T-cell (primary cell): ENCODE measurements at regions of chr1 and their contacts with region 1.

Region 1: DNA sequence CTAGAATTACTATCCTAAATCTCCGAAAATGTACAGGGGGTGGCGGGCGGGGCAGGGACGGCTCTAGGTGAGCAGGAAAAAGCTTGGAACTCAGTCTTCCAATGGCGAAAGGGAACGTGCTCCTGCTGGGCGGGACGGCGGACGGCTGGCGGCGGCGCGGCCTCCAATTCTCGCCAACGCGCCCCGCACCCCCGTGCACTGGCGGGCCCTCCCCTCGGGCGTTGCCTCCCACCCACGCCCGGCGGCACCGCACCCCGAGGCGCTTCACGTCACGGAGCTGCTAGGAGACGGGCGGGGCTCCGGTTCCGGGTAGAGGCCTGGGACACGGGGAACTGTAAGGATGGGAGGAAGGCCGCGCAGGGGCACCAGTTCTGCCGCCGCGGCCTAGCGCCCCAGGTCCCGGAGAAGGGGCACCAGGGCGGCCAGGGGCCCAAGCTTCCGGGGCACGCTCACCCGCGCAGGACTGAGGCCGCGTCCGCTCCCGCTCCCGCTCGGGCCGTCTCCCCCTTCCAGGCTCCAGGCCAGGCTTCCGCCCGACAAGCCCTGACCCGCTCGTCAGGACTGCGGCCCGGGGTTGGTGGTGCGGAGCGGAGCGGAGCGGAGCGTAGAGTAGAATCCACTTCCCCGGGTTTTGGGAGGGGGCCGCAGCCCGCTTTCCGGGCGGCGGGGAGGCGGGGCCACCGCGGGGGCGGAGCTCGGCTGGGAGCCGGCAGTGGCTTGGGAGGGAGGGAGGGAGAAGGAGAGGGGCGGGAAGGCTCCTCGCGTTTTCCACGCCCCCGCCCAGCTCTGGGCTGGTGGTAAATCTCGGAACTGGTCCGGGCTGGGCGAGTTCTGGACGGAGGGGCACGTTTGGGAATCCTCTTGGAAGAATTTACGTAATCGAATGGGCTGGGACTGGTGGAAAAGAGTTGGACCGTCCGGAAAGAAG is at the start of gene DDX59:
- DNase-seq: peak; percentile 73 to 92 (median 83)
- ATAC-seq: peak; percentile 88 to 91 (median 89)
- H3K4me3 ChIP-seq: peak within 1 kb of the TSS; percentile 61 to 78
- H3K4me3 Mint-ChIP-seq: peak within 1 kb of the TSS; percentile 93 to 95 (median 95)
- H3K27ac ChIP-seq: peak within 1 kb of the TSS; percentile 86
- H3K27ac Mint-ChIP-seq: peak within 1 kb of the TSS; percentile 88 to 97
- H3K4me1 ChIP-seq: peaks cover 12 to 17% of the 10 kb centered on the region in 2 experiments
- H3K4me1 Mint-ChIP-seq: peaks cover 44 to 52% (median 50%) of the 10 kb centered on the region in 3 donors
- H3K27me3 ChIP-seq: no peaks in the 10 kb centered on the region
- H3K27me3 Mint-ChIP-seq: no peaks in the 10 kb centered on the region
- total RNA-seq, gene DDX59: 19.2 to 38.7 (median 31.7) TPM

Region 2: DNA sequence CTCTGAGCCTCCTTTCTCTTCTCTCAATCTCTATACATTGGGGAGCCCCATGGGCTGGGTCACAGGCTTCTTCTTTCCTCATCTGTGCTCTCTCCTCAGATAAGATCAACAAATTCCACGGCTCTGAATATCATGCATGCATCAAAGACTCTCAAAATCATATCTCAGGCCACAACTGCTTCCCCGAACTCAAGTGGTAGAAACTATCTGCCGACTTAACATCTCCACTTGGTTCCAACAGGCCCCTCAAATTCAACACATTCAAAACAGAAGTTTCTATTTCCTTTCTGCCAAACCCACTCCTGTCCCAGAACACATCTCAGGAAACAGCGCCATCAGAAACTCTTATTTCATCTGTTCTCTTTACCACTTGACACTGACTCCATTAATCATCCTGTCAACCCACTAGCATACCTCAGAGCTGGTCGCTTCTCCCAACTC is 16.5 kb before region 1 on chr1:
- CTCF ChIA-PET with region 1: interaction called in 1 of 2 experiments, 4 read pairs
- POLR2A ChIA-PET with region 1: interaction called in 1 of 2 experiments, 13 read pairs
- DNase-seq: no peak
- ATAC-seq: no peak
- H3K4me3 ChIP-seq: no peak overlapping the region
- H3K4me3 Mint-ChIP-seq: no peak overlapping the region
- H3K27ac ChIP-seq: no peak overlapping the region
- H3K27ac Mint-ChIP-seq: peak overlapping the region; percentile 10 to 78
- H3K4me1 ChIP-seq: no peaks in the 10 kb centered on the region
- H3K4me1 Mint-ChIP-seq: peaks cover 10 to 26% (median 14%) of the 10 kb centered on the region in 3 donors
- H3K27me3 ChIP-seq: no peaks in the 10 kb centered on the region
- H3K27me3 Mint-ChIP-seq: no peaks in the 10 kb centered on the region

Region 3: GRCh38 chr1:200724064-200724463 is 54.5 kb after region 1 on chr1:
- CTCF ChIA-PET with region 1: no interaction called
- POLR2A ChIA-PET with region 1: no interaction called
- DNase-seq: no peak
- ATAC-seq: no peak
- H3K4me3 ChIP-seq: no peak overlapping the region
- H3K4me3 Mint-ChIP-seq: no peak overlapping the region
- H3K27ac ChIP-seq: no peak overlapping the region
- H3K27ac Mint-ChIP-seq: no peak overlapping the region
- H3K4me1 ChIP-seq: no peaks in the 10 kb centered on the region
- H3K4me1 Mint-ChIP-seq: no peaks in the 10 kb centered on the region
- H3K27me3 ChIP-seq: peaks cover 0 to 3% of the 10 kb centered on the region in 2 experiments
- H3K27me3 Mint-ChIP-seq: peaks cover 3 to 7% of the 10 kb centered on the region in 2 donors

Region 4: GRCh38 chr1:200802865-200803512 is 133.4 kb after region 1 on chr1:
- CTCF ChIA-PET with region 1: interaction called, 5 to 6 read pairs
- POLR2A ChIA-PET with region 1: interaction called in 1 of 2 experiments, 12 read pairs
- DNase-seq: peak; percentile 24 to 86 (median 61)
- ATAC-seq: peak; percentile 73 to 80 (median 78)
- H3K4me3 ChIP-seq: no peak overlapping the region
- H3K4me3 Mint-ChIP-seq: no peak overlapping the region
- H3K27ac ChIP-seq: no peak overlapping the region
- H3K27ac Mint-ChIP-seq: no peak overlapping the region
- H3K4me1 ChIP-seq: no peaks in the 10 kb centered on the region
- H3K4me1 Mint-ChIP-seq: peaks cover 2 to 5% (median 4%) of the 10 kb centered on the region in 3 donors
- H3K27me3 ChIP-seq: no peaks in the 10 kb centered on the region
- H3K27me3 Mint-ChIP-seq: no peaks in the 10 kb centered on the region